ENCODE measurements at regions of chr11 and their contacts with region 1.

Region 1: DNA sequence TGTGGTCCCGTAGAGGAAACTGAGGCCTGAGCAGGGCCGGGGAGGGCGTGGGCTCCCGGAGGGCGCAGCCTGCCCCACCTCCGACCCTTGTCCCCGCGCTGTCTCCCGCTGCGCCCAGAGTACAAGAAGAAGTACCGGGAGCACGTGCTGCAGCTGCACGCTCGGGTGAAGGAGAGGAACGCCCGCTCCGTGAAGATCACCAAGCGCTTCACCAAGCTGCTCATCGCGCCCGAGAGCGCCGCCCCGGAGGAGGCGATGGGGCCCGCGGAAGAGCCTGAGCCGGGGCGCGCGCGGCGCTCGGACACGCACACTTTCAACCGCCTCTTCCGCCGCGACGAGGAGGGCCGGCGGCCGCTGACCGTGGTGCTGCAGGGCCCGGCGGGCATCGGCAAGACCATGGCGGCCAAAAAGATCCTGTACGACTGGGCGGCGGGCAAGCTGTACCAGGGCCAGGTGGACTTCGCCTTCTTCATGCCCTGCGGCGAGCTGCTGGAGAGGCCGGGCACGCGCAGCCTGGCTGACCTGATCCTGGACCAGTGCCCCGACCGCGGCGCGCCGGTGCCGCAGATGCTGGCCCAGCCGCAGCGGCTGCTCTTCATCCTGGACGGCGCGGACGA is 1.9 kb downstream of the NLRP6 start:
- DNase-seq: peak in 6 of 9 experiments; percentile 60 to 77 (median 67)
- ATAC-seq: peak; percentile 62
- H3K4me3 ChIP-seq: peak overlapping the region; percentile 56 to 70
- H3K4me3 Mint-ChIP-seq: peak overlapping the region; percentile 89
- H3K27ac ChIP-seq: peak overlapping the region in 1 of 2 experiments; percentile 57
- H3K27ac Mint-ChIP-seq: peak overlapping the region; percentile 89
- H3K4me1 ChIP-seq: peaks cover 49% of the 10 kb centered on the region
- H3K4me1 Mint-ChIP-seq: peaks cover 55% of the 10 kb centered on the region
- H3K27me3 ChIP-seq: peaks cover 0 to 11% of the 10 kb centered on the region in 2 experiments
- H3K27me3 Mint-ChIP-seq: no peaks in the 10 kb centered on the region
- CTCF ChIP-seq: no peak

Region 2: DNA sequence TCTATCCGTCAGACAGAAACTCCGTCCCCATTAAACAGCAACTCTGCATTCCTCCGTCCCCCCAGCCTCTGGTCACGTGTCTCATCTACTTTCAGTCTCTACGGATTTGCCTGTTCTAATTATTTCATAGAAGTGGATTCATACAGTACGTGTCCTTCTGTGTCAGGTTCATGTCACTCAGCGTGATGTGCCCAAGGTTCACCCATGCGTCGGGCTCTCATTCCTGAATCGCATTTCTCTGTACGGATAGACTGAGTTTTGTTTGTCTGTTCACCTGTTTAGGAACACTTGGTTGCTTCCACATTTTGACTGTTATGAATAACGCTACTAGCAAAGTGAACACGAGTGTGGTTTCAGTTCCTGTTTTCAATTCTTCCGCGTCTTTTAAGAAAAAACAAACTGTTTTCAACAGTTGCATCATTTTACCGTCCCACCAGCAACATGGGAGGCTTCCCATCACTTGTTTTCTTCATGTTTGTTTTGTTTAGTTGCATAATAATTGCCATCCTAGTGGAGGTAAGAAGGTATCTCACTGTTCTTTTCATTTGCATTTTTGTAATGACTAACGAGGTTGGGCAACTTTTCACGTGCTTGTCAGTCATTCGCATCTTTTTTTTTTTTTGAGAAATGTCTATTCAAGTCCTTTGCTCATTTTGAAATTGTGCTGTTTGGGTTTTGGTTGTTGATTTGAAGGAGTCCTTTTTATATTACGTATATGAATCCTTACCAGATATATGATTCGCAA is 10.8 kb before region 1 on chr11:
- CTCF ChIA-PET with region 1: interaction called, 37 read pairs
- POLR2A ChIA-PET with region 1: interaction called, 214 read pairs
- intact Hi-C with region 1: loop called (anchors 1 kb)
- DNase-seq: peak in 5 of 9 experiments; percentile 60 to 90 (median 77)
- ATAC-seq: peak; percentile 69
- H3K4me3 ChIP-seq: peak overlapping the region; percentile 38 to 60
- H3K4me3 Mint-ChIP-seq: peak overlapping the region; percentile 85
- H3K27ac ChIP-seq: peak overlapping the region; percentile 76 to 96
- H3K27ac Mint-ChIP-seq: peak overlapping the region; percentile 98
- H3K4me1 ChIP-seq: peaks cover 23% of the 10 kb centered on the region
- H3K4me1 Mint-ChIP-seq: peaks cover 30% of the 10 kb centered on the region
- H3K27me3 ChIP-seq: no peaks in the 10 kb centered on the region
- H3K27me3 Mint-ChIP-seq: no peaks in the 10 kb centered on the region
- CTCF ChIP-seq: no peak

Region 3: DNA sequence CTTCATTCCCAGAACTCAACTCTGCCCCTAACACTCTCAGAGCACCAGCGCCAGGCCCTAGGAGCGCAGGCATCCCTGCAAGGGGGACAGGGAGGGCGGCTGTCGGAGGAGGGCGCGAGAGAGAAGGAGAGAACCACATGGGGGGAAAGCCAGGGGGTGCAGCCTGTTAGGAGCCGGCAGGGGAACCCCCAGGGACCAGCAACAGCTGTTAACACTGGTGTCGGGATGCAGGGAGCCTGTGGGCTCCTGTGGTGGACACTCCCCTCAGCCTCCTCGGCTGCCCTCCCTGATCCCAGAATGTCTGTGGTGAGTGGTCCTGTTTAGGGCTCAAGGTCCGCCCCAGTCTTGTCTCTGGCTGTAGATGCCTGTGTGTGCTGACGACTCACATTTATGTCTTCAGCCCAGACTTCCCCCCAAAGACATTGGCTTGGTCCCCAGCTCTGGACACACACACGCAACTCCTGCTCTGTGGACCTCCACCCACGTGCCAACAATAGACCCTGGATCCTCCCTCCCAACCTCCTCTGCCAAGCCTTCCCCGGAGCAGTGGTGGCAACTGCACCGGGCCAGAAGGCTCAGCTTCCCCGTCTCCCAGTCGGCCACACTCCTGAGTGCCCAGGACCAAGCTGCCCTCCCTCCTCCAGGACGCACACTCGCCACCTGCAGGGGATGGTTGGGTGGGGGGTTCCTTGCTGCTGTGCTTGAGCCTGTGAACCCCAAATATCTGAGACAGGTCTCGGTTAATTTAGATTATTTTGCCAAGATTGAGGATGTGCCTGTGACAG is 20.1 kb after region 1 on chr11:
- CTCF ChIA-PET with region 1: interaction called, 36 read pairs
- POLR2A ChIA-PET with region 1: interaction called, 10 read pairs
- intact Hi-C with region 1: no loop called
- DNase-seq: peak in 4 of 9 experiments; percentile 49 to 72 (median 59)
- ATAC-seq: peak; percentile 59
- H3K4me3 ChIP-seq: no peak overlapping the region
- H3K4me3 Mint-ChIP-seq: no peak overlapping the region
- H3K27ac ChIP-seq: no peak overlapping the region
- H3K27ac Mint-ChIP-seq: no peak overlapping the region
- H3K4me1 ChIP-seq: peaks cover 60% of the 10 kb centered on the region
- H3K4me1 Mint-ChIP-seq: peaks cover 56% of the 10 kb centered on the region
- H3K27me3 ChIP-seq: no peaks in the 10 kb centered on the region
- H3K27me3 Mint-ChIP-seq: no peaks in the 10 kb centered on the region
- CTCF ChIP-seq: peak; percentile 48

Region 4: DNA sequence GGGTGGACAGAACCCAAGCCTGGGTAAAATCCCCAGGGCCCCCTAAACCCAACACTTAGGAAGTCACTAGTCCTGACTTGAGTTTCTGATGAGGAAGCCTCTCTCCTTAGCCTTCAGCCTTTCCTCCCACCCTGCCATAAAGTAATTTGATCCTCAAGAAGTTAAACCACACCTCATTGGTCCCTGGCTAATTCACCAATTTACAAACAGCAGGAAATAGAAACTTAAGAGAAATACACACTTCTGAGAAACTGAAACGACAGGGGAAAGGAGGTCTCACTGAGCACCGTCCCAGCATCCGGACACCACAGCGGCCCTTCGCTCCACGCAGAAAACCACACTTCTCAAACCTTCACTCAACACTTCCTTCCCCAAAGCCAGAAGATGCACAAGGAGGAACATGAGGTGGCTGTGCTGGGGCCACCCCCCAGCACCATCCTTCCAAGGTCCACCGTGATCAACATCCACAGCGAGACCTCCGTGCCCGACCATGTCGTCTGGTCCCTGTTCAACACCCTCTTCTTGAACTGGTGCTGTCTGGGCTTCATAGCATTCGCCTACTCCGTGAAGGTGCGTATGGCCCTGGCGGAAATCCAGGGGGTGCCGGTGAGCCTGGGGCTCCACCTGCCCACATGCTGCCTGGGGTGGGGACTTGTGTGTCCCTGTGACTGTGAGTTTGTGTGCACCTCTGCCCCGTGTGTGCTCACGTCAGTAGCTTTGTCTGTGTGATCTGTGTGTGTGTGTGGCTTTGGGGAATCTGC is 33.9 kb after region 1 on chr11 and contains the start of gene IFITM1:
- CTCF ChIA-PET with region 1: interaction called, 5 read pairs
- POLR2A ChIA-PET with region 1: interaction called, 10 read pairs
- intact Hi-C with region 1: no loop called
- DNase-seq: peak in 7 of 9 experiments; percentile 54 to 86 (median 71)
- ATAC-seq: peak; percentile 49
- H3K4me3 ChIP-seq: peak within 1 kb of the TSS; percentile 95 to 97
- H3K4me3 Mint-ChIP-seq: peak within 1 kb of the TSS; percentile 95
- H3K27ac ChIP-seq: peak within 1 kb of the TSS; percentile 83 to 88
- H3K27ac Mint-ChIP-seq: peak within 1 kb of the TSS; percentile 98
- H3K4me1 ChIP-seq: peaks cover 18% of the 10 kb centered on the region
- H3K4me1 Mint-ChIP-seq: peaks cover 45% of the 10 kb centered on the region
- H3K27me3 ChIP-seq: no peaks in the 10 kb centered on the region
- H3K27me3 Mint-ChIP-seq: no peaks in the 10 kb centered on the region
- CTCF ChIP-seq: no peak
- total RNA-seq, gene IFITM1: 223 to 251 TPM

Region 5: DNA sequence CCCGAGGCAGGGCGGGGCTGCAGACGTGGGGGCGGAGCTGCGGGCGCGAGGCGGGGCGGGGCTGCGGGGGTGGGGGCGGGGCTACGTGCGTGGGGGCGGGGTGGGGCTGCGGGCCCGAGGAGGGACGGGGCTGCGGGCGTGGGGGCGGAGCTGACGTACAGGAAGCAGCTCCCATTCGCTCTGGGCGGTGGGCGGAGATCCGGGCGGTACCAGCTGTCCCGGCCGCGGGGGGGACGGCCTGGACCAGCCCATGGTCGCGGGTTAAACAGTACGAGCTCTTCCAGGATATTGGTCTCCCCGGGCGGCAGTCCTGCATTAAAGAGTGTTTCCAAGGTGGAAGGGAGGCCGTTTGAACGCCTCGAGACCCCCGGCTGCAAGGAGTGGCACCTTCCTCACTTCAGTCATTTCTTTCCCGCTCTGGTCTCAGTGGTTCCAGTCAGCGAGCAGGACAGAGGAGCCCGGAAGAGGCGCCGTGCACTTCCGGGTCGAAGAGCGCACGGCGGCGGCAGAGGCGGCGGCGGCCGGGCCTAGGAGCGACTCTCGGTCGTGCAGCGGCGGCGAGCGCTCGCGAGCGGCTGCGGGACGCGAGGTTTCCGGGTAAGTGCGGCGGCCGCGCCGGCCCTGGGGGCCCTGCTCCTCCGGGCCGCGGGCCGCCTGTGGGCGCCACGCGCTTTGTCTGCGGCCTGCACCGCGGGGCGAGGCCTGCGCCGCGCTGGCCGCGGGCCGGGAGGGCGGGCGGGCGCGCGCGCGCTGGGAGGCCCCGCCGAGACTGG is 296.1 kb after region 1 on chr11 and contains the start of gene PHRF1:
- CTCF ChIA-PET with region 1: no interaction called
- POLR2A ChIA-PET with region 1: no interaction called
- intact Hi-C with region 1: no loop called
- DNase-seq: peak; percentile 91 to 98 (median 96)
- ATAC-seq: peak; percentile 88
- H3K4me3 ChIP-seq: peak within 1 kb of the TSS; percentile 89 to 93
- H3K4me3 Mint-ChIP-seq: peak within 1 kb of the TSS; percentile 98
- H3K27ac ChIP-seq: peak within 1 kb of the TSS; percentile 84 to 95
- H3K27ac Mint-ChIP-seq: peak within 1 kb of the TSS; percentile 96
- H3K4me1 ChIP-seq: peaks cover 46% of the 10 kb centered on the region
- H3K4me1 Mint-ChIP-seq: peaks cover 54% of the 10 kb centered on the region
- H3K27me3 ChIP-seq: no peaks in the 10 kb centered on the region
- H3K27me3 Mint-ChIP-seq: peaks cover 2% of the 10 kb centered on the region
- CTCF ChIP-seq: no peak
- total RNA-seq, gene PHRF1: 43.2 to 44.9 TPM